Posterior vena cava (tissue), 2 donors: ENCODE measurements at regions of chr15 and their contacts with region 1.

Region 1: GRCh38 chr15:64583519-64583918 is 123.1 kb downstream of the ZNF609 start:
- DNase-seq: no peak

Region 2: GRCh38 chr15:64426845-64427465 is 156.6 kb before region 1 on chr15:
- intact Hi-C with region 1: no loop called
- DNase-seq: no peak

Region 3: GRCh38 chr15:64521726-64522164 is 61.8 kb before region 1 on chr15:
- intact Hi-C with region 1: no loop called
- DNase-seq: no peak

Region 4: DNA sequence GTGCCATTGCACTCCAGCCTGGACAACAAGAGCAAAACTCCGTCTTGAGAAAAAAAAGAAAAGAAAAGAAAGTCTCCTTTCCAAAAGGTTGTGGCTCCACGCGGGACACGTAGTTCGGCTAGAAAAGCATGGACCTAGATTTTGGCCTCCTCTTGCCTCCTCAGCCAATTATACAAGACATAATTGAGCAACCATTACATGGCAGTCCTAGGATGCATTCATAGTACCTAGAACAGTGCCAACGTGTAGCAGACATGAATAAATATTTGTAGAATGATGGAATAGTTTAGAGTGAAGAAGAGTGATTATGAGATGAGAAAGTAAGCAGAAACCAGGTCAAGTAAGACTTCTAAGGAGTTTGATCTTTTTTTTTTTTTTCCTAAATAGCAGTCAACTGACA is 10.7 kb before region 1 on chr15:
- intact Hi-C with region 1: loop called in 1 of 2 experiments (anchors 1 kb)
- DNase-seq: no peak

Region 5: DNA sequence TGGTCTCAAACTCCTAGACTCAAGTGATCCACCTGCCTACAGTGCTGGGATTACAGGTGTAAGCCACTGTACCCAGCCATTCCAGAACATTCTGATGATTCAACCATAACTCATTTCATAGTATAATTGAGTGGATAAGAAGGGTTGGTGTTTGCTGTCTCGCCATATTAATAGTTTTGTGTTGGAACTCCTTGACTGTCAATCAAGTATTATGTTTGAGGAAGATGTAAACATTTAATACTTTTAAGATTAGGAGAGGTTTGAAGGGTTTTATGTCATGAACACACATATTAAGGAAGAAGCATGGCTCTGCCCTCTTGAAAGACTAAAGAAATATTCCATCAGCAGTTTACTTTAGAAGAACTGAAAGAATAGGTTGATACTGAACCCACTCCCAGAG is 10.2 kb after region 1 on chr15:
- intact Hi-C with region 1: loop called in 1 of 2 experiments (anchors 1 kb)
- DNase-seq: no peak